Transverse colon (tissue), 4 donors: ENCODE measurements at regions of chr1 and their contacts with region 1.

Region 1: GRCh38 chr1:160428655-160429054 is 28.3 kb downstream of the VANGL2 start:
- DNase-seq: peak; percentile 75
- H3K4me3 ChIP-seq: no peak overlapping the region
- H3K27ac ChIP-seq: peak overlapping the region; percentile 22 to 66 (median 56)
- H3K4me1 ChIP-seq: peaks cover 0 to 32% (median 7%) of the 10 kb centered on the region in 4 donors
- H3K27me3 ChIP-seq: no peaks in the 10 kb centered on the region
- CTCF ChIP-seq: peak; percentile 46 to 79 (median 58)
- EP300 ChIP-seq: no peak
- POLR2A ChIP-seq: no peak

Region 2: GRCh38 chr1:160179336-160179735 is 249.3 kb before region 1 on chr1:
- in situ Hi-C with region 1: no loop called
- intact Hi-C with region 1: no loop called
- DNase-seq: no peak
- H3K4me3 ChIP-seq: no peak overlapping the region
- H3K27ac ChIP-seq: no peak overlapping the region
- H3K4me1 ChIP-seq: no peaks in the 10 kb centered on the region
- H3K27me3 ChIP-seq: no peaks in the 10 kb centered on the region
- CTCF ChIP-seq: no peak
- EP300 ChIP-seq: no peak
- POLR2A ChIP-seq: no peak

Region 3: GRCh38 chr1:160494620-160495019 is 66.0 kb after region 1 on chr1:
- in situ Hi-C with region 1: no loop called
- intact Hi-C with region 1: no loop called
- DNase-seq: no peak
- H3K4me3 ChIP-seq: no peak overlapping the region
- H3K27ac ChIP-seq: no peak overlapping the region
- H3K4me1 ChIP-seq: no peaks in the 10 kb centered on the region
- H3K27me3 ChIP-seq: no peaks in the 10 kb centered on the region
- CTCF ChIP-seq: peak in 2 of 5 experiments; percentile 25 to 34
- EP300 ChIP-seq: no peak
- POLR2A ChIP-seq: no peak

Region 4: GRCh38 chr1:160607011-160607671 is 178.5 kb after region 1 on chr1:
- in situ Hi-C with region 1: loop called (anchors 5 to 25 kb)
- intact Hi-C with region 1: no loop called
- DNase-seq: peak; percentile 55
- H3K4me3 ChIP-seq: no peak overlapping the region
- H3K27ac ChIP-seq: no peak overlapping the region
- H3K4me1 ChIP-seq: peaks cover 0 to 7% (median 0%) of the 10 kb centered on the region in 4 donors
- H3K27me3 ChIP-seq: no peaks in the 10 kb centered on the region
- CTCF ChIP-seq: peak; percentile 58 to 84 (median 64)
- EP300 ChIP-seq: no peak
- POLR2A ChIP-seq: no peak

Region 5: DNA sequence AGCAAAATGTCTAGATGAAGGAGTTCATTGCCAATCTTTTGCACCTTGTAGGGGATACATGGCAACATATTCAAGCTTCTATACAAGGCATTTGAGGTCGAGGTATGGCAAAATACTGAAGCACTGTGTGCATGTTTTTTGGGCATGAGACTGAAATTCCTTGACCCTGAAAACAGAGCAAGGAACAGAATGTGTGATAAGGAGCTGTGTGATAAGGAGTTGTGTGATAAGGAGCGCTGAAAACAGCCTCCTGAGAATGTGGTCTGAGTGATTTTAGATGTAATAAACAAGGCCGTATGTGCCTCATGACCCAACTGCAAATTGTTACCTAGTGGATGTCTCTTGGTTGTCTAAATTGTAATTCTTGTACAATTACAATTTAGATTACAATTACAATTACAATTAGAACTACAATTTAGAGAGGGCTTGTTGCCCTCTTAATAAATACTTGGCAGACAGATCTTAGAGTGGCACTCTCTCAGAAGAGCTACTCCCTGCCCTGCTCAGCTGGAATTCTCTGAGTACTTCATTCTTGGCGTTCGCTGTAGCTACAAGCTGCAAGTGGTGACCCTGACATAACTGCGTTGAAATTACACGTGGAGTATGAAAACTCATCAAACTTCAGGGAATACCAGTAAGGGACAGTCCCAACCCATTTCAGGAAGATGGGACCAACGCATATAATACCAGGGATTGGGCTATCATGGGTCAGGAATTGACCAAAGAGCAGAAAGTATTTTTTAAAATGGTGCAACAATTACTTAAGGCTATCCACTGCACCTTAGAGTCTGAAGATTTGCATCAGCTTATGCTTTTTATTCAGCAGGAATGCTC is 476.3 kb after region 1 on chr1:
- in situ Hi-C with region 1: no loop called
- intact Hi-C with region 1: no loop called
- DNase-seq: no peak
- H3K4me3 ChIP-seq: no peak overlapping the region
- H3K27ac ChIP-seq: no peak overlapping the region
- H3K4me1 ChIP-seq: no peaks in the 10 kb centered on the region
- H3K27me3 ChIP-seq: peaks cover 3% of the 10 kb centered on the region
- CTCF ChIP-seq: no peak
- EP300 ChIP-seq: no peak
- POLR2A ChIP-seq: no peak